ENCODE measurements at regions of chr5 and their contacts with region 1.

Region 1: DNA sequence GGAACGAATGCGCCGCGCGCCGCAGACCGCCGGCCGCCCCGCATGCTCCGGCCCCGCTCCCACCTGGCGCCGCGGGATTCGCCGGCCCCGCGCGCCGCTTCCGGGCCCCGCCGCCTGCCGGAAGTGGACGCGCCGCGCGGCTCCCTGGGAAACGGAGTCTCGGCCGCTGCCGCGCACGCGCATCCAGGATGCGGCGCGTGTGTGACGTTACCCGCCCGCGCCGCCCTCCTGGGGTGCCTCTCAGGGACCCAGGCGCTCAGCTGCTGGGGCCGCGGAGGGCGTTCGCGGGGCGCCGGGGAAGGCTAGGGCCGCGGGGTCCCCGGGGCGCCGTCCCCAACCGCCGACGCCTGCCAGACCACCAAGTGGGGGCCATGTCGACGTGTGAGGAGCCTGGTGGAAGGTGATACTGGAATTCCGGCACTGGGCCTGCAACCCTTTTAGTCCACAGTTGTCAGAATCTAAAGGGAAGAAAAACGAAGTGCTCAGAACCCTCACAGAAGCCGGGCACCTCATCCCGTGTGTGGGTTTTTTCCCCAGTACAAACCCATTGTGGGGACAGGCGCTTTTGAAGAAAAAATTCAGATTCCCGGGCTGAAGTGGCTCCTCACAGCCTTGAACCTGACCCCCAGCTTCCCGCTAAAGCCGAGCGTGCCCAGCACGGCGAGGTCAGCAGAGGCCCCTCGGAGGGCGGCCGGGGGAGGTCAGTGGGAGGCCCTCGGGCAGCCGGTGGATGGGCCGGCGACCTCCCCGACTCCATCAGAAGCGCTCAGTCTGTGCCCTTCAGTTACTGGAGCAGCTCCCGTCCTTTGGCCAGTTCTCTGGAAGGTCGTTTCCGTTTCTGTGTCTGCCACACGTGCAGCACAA is at the start of gene CLPTM1L:
- DNase-seq: peak; percentile 97

Region 2: GRCh38 chr5:1325870-1326532 is 19.2 kb before region 1 on chr5:
- CTCF ChIA-PET with region 1: no interaction called
- POLR2A ChIA-PET with region 1: interaction called, 26 read pairs
- DNase-seq: no peak